H1 (cell line): ENCODE measurements at regions of chr15 and their contacts with region 1.

Region 1: DNA sequence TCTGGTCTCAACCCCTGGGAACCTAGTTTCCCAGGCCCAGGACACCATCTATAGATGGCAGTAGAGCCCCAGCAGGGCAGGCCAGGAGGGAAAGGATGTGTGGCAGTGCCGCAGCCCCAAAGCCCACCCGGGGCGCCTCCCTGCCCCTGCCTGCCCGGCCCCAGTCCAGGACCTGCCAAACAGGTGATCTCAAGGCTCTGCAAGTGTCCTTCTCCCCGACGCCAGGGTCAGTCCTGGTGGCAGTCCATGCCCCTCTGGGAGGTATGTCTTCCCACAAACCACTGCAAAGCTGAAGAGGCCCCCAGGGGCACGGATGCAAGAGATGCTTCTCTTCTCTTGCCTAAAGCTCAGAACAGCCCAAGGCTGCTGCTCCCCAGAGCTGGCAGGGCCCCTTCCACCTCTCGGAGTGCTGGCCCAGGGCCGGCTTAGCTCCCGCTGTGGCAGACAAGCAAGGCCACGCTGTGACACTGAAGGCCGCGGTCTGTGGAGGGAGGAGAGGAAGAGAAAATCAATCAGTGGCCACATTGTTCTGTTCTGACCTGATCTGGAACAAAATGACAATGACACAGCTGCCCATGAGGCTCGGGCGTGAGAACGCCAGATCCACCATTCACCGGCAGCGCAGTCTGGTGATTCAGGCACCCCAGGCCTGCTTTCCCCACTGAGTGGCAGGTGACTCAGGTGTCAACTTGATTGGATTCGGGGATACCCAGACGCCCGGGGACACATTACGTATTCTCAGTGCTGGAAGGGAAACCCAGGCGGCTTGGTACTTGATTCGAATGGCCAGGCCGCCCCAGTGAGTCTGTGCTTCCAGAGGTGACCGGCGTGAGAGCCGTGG is 34.0 kb downstream of the KLHL25 start:
- DNase-seq: no peak
- H3K4me3 ChIP-seq: no peak overlapping the region
- H3K27ac ChIP-seq: no peak overlapping the region
- H3K4me1 ChIP-seq: peaks cover 0 to 1% (median 0%) of the 10 kb centered on the region in 4 experiments; a peak in 2 of 7 replicates
- H3K27me3 ChIP-seq: no peaks in the 10 kb centered on the region
- CTCF ChIP-seq: no peak
- EP300 ChIP-seq: no peak
- POLR2A ChIP-seq: no peak
- RAD21 ChIP-seq: peak in 1 of 2 experiments; percentile 37; a peak in 2 of 4 replicates

Region 2: DNA sequence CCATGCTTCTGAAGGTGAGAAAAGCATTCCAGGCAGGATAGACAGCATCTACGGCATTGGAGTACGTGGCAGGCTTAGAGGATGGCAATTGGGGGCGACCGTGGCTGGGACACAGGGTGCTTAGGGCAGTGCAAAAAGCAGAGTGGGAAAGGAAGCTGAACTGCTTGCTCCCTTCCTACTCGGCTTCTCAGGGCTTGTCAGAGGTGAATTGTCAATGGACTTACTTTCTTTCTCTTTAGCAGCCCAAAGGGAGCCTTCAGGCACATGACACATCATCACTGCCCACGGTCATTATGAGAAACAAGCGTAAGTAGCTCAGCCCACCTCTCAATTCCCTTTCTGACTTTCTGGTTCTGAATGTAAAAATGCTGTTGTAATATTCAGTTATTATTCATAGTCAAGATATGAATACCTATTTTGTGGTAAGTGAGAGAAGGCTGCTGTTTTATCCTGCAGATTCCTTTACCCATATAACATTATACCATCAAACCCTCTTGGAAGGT is 50.4 kb before region 1 on chr15:
- CTCF ChIA-PET with region 1: no interaction called
- POLR2A ChIA-PET with region 1: no interaction called
- DNase-seq: no peak
- H3K4me3 ChIP-seq: no peak overlapping the region
- H3K27ac ChIP-seq: no peak overlapping the region
- H3K4me1 ChIP-seq: no peaks in the 10 kb centered on the region; a peak in 2 of 7 replicates
- H3K27me3 ChIP-seq: no peaks in the 10 kb centered on the region
- CTCF ChIP-seq: no peak
- EP300 ChIP-seq: no peak
- POLR2A ChIP-seq: no peak
- RAD21 ChIP-seq: no peak

Region 3: DNA sequence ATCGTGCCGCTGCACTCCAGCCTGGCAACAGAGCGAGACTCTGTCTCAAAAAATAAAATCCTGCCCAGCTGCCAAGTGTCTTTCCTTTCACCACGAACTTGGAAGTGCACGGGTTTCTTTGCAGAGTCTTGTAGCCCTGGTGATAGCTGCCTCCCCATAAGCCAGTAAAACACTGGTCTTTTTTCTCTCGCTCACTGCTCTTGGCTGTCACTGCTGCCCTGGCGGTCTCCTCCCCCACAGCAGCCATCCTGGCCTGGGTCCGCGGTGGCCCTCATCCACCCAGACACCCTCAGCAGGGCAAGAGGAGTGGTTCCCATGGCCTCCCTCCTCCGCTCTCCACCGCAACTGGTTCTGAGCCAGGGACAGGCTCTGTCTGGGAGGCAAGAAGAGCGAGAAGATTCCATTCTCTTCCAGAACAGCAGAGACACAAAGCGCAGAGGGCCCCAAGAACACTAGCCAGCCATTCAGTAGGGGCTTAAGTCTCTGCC is 10.4 kb before region 1 on chr15:
- CTCF ChIA-PET with region 1: interaction called, 14 read pairs
- POLR2A ChIA-PET with region 1: interaction called, 22 read pairs
- DNase-seq: no peak
- H3K4me3 ChIP-seq: no peak overlapping the region
- H3K27ac ChIP-seq: no peak overlapping the region
- H3K4me1 ChIP-seq: peaks cover 6 to 45% (median 33%) of the 10 kb centered on the region in 4 experiments
- H3K27me3 ChIP-seq: no peaks in the 10 kb centered on the region
- CTCF ChIP-seq: no peak
- EP300 ChIP-seq: no peak
- POLR2A ChIP-seq: no peak
- RAD21 ChIP-seq: no peak

Region 4: GRCh38 chr15:85778107-85778776 is 17.5 kb after region 1 on chr15:
- CTCF ChIA-PET with region 1: interaction called, 10 read pairs
- POLR2A ChIA-PET with region 1: interaction called, 3 read pairs
- DNase-seq: no peak
- H3K4me3 ChIP-seq: no peak overlapping the region
- H3K27ac ChIP-seq: no peak overlapping the region
- H3K4me1 ChIP-seq: peaks cover 0 to under 1% (median 0%) of the 10 kb centered on the region in 4 experiments; a peak in 2 of 7 replicates
- H3K27me3 ChIP-seq: no peaks in the 10 kb centered on the region
- CTCF ChIP-seq: no peak
- EP300 ChIP-seq: no peak
- POLR2A ChIP-seq: no peak
- RAD21 ChIP-seq: no peak

Region 5: DNA sequence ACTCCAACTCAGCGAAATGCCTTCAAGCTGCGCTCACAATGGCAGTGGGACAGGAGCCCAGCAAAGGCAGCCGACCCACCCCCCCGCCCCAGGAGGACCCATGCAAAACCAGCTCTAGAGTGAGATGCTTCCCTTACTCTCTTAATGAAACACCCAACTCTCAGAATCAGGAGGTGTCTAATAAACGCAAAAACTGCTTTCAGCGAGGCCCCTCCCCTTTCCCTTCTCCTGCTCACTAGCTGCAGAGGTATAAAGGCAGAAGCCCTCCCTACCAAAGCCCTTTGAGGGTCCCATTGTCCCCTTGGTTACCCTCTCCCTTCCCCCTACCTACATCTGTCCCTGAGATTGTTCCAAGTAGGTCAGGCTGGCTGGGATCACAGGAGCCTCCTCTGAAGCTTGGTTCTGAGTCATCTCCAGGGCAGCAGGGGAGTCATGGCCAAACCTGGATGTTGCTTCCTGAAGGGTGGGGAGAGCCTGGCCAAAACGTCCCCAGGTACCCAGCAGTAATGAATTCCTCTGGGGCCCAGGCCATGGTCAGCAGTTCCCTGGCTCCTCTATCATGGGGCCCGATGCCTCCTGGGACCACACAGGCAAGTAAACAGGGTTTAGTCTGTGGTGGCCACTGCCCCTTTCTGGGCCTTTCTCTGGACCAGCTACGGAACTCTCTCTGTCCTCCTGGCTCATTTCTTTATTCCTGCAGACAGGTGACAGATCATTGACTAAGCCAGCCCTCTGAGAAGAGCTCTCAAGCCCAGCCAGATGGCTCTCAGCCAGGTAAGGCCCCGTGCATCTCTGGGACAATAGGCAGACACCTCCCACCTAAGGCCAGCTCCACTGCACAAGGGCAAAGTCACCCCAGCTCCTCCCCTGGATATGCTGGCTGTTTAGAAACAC is 25.4 kb after region 1 on chr15:
- CTCF ChIA-PET with region 1: interaction called, 12 read pairs
- POLR2A ChIA-PET with region 1: no interaction called
- DNase-seq: no peak
- H3K4me3 ChIP-seq: no peak overlapping the region
- H3K27ac ChIP-seq: no peak overlapping the region
- H3K4me1 ChIP-seq: peaks cover 0 to 21% (median 11%) of the 10 kb centered on the region in 4 experiments; a peak in 6 of 7 replicates
- H3K27me3 ChIP-seq: no peaks in the 10 kb centered on the region
- CTCF ChIP-seq: no peak
- EP300 ChIP-seq: no peak
- POLR2A ChIP-seq: no peak
- RAD21 ChIP-seq: no peak

Region 6: GRCh38 chr15:85793641-85794602 is 33.2 kb after region 1 on chr15:
- CTCF ChIA-PET with region 1: interaction called, 12 read pairs
- POLR2A ChIA-PET with region 1: no interaction called
- DNase-seq: no peak
- H3K4me3 ChIP-seq: peak overlapping the region; percentile 59 to 94 (median 90)
- H3K27ac ChIP-seq: peak overlapping the region; percentile 71; the same call in 1 of the 2 replicates
- H3K4me1 ChIP-seq: peaks cover 9 to 22% (median 14%) of the 10 kb centered on the region in 4 experiments
- H3K27me3 ChIP-seq: peaks cover 0 to 4% (median 1%) of the 10 kb centered on the region in 4 experiments; a peak in 3 of 7 replicates
- CTCF ChIP-seq: no peak
- EP300 ChIP-seq: no peak
- POLR2A ChIP-seq: no peak; a peak in 1 of 3 replicates
- RAD21 ChIP-seq: no peak